ENCODE measurements at regions of chr5 and their contacts with region 1.

Region 1: DNA sequence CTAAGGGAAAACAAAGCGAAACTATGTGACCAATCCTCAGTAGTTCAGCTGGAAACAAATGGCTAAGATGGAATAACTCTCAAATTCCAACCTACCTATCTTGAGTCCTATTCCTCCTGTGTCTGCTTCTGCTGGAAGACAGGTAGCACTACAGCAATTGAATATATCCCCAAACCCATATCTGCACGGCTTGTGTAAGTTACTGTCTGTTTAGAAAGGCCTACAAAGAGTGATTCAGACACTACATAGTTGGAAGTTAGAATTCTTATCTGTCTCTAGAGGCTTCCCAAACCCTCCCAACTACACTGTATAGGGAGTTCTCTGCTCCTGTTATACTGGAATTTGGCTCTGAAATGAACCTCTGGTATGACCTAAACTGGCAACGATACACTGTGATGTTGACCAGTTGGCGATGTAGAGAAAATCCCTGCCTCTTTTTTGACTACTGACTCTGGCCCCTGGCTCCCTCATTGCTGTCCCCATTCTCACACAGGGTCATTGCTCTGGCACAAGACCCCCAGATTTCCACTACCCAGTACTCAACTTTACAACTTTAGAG is 22.6 kb upstream of the NADK2 start:
- DNase-seq: no peak
- H3K4me3 ChIP-seq: no peak overlapping the region
- H3K27ac ChIP-seq: no peak overlapping the region
- H3K4me1 ChIP-seq: no peaks in the 10 kb centered on the region
- H3K27me3 ChIP-seq: no peaks in the 10 kb centered on the region
- CTCF ChIP-seq: no peak

Region 2: GRCh38 chr5:36305571-36306326 is 41.5 kb after region 1 on chr5:
- CTCF ChIA-PET with region 1: no interaction called
- POLR2A ChIA-PET with region 1: no interaction called
- intact Hi-C with region 1: loop called (anchors 2 kb)
- DNase-seq: peak; percentile 60
- H3K4me3 ChIP-seq: no peak overlapping the region
- H3K27ac ChIP-seq: no peak overlapping the region
- H3K4me1 ChIP-seq: peaks cover 10% of the 10 kb centered on the region
- H3K27me3 ChIP-seq: no peaks in the 10 kb centered on the region
- CTCF ChIP-seq: peak; percentile 87

Region 3: DNA sequence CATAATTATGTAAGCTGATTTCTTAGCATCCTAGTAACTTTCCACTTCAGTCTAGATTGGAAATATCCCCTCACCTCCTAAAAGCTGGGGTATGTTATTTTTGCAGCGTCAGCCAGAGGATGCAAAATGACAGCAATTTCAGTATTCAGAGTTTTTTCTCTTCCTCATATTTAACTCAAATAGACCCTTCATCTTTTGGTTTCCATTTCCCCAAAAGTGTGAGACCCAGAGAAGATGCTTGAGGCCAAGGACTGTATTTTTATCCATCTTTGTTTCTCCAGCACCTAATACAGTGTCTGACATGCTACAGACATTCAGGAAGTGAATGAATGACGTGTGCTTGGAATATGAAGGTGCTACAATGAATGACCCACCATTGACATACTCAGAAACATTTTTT is 112.9 kb after region 1 on chr5:
- CTCF ChIA-PET with region 1: interaction called, 14 read pairs
- POLR2A ChIA-PET with region 1: no interaction called
- intact Hi-C with region 1: no loop called
- DNase-seq: no peak
- H3K4me3 ChIP-seq: no peak overlapping the region
- H3K27ac ChIP-seq: no peak overlapping the region
- H3K4me1 ChIP-seq: no peaks in the 10 kb centered on the region
- H3K27me3 ChIP-seq: no peaks in the 10 kb centered on the region
- CTCF ChIP-seq: no peak

Region 4: GRCh38 chr5:36397901-36398536 is 133.7 kb after region 1 on chr5:
- CTCF ChIA-PET with region 1: no interaction called
- POLR2A ChIA-PET with region 1: no interaction called
- intact Hi-C with region 1: loop called (anchors 2 kb)
- DNase-seq: peak; percentile 72
- H3K4me3 ChIP-seq: no peak overlapping the region
- H3K27ac ChIP-seq: no peak overlapping the region
- H3K4me1 ChIP-seq: peaks cover 24% of the 10 kb centered on the region
- H3K27me3 ChIP-seq: no peaks in the 10 kb centered on the region
- CTCF ChIP-seq: peak; percentile 61

Region 5: DNA sequence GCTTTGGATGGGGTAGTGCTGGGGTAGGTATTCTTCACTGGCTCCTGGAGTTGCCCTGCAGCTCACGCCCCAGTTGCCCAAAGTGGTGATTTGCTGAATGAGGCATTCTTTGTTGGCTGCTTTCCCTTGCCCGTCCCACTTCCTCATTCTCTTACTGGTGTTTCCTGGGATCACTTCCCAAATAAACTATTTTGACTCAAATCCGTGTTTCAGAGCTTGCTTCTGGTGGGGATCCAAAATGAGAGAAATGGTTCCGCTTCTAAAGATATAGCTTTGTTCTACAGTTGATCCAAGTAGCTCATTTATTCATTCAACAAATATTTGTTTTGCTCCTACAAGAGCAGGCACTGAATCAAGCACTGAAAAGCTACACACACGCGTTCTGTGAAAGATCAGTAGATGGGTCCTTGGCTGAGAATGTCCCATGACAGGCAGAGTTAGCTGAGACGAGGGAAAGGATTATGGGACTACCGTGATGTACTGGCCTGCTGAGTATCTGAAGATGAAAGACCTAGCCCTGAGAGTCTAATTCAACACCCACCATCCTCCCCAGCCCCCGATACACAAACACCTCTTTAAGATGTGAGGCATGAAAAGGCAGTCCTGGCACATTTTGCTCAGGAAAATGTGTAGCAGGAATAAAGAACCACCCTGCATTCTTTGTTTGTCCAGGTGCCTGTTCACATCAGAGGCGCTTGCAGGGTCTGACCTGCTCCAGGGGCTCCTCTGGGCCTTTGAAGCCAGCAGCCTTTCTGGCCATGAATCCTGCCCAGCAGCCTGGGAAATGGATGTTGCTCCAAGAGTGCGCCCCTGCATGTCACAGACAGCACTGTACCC is 180.5 kb after region 1 on chr5:
- CTCF ChIA-PET with region 1: no interaction called
- POLR2A ChIA-PET with region 1: no interaction called
- intact Hi-C with region 1: no loop called
- DNase-seq: no peak
- H3K4me3 ChIP-seq: no peak overlapping the region
- H3K27ac ChIP-seq: no peak overlapping the region
- H3K4me1 ChIP-seq: no peaks in the 10 kb centered on the region
- H3K27me3 ChIP-seq: no peaks in the 10 kb centered on the region
- CTCF ChIP-seq: no peak

Region 6: DNA sequence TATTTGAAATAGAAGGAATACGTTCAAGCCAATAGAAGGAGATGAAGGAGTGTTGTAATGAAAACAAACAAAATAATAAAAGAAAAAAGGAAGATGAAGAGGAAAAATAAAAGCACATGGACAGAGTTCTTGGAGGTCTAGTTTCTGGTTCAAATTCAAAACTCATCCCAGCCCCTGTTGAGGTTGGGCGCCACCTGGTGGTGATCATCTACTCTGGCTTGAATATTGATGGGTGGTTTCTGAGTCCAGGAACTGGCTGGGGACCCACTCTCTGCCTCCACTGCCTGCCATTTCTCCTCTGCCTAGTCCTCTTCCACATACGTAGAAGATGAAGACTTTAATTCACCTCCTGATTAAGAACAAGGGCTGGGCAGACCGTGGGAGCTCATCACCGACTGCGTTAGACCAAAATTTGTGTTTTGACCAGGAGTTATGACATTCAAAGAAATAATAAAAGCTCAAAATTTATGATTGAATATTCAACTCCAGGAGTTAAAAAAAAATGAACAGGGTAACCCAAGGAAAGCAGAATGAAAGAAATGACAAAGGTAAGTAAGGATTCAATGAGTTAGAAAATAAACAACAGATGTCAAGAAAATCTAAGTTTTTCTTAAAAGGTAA is 243.2 kb after region 1 on chr5:
- CTCF ChIA-PET with region 1: no interaction called
- POLR2A ChIA-PET with region 1: no interaction called
- intact Hi-C with region 1: loop called (anchors 10 kb)
- DNase-seq: peak; percentile 85
- H3K4me3 ChIP-seq: no peak overlapping the region
- H3K27ac ChIP-seq: no peak overlapping the region
- H3K4me1 ChIP-seq: no peaks in the 10 kb centered on the region
- H3K27me3 ChIP-seq: no peaks in the 10 kb centered on the region
- CTCF ChIP-seq: peak; percentile 88